IMR-90 (cell line): ENCODE measurements at regions of chr14 and their contacts with region 1.

Region 1: DNA sequence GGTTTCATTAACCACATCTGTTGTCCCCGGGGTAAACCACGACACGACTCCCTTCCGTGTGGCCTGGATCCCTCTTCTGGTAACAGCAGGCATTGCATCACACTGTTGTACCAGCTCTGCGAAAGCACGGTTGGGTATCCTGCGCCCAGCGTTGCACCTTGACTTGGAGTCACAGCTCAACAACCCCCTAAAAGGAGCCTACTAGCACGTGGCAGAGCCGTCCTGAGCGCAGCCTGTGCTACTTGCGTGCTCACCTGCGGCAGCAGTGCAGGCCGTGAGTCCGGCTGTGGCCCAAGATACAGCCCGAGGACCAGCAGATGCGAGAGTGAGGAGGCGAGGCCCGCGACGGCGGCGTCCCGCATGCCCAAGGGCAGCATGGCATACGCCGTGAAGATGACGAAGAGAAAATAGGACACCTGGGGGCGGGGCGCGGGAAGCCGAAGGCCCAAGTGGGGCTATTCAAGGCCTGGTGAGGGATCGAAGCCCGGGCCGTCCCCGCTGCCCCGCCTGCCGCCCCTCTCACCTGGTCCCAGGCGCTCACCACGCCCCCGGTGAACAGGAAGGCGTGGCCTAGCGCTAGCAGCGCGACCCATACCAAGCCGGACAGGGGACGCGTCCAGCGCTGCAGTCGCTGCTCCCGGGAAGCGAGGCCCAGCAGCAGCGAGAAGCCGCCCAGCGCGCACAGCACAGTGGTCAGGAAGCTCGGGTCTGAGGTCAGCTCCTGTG is 2.4 kb downstream of the ADCY4 start:
- DNase-seq: peak; percentile 52
- ATAC-seq: peak; percentile 79
- H3K4me3 ChIP-seq: no peak overlapping the region
- H3K27ac ChIP-seq: no peak overlapping the region
- H3K4me1 ChIP-seq: peaks cover 3% of the 10 kb centered on the region; the same call in 1 of the 2 replicates
- H3K27me3 ChIP-seq: peaks cover 43% of the 10 kb centered on the region
- CTCF ChIP-seq: peak; percentile 64
- POLR2A ChIP-seq: no peak
- RAD21 ChIP-seq: peak; percentile 52

Region 2: DNA sequence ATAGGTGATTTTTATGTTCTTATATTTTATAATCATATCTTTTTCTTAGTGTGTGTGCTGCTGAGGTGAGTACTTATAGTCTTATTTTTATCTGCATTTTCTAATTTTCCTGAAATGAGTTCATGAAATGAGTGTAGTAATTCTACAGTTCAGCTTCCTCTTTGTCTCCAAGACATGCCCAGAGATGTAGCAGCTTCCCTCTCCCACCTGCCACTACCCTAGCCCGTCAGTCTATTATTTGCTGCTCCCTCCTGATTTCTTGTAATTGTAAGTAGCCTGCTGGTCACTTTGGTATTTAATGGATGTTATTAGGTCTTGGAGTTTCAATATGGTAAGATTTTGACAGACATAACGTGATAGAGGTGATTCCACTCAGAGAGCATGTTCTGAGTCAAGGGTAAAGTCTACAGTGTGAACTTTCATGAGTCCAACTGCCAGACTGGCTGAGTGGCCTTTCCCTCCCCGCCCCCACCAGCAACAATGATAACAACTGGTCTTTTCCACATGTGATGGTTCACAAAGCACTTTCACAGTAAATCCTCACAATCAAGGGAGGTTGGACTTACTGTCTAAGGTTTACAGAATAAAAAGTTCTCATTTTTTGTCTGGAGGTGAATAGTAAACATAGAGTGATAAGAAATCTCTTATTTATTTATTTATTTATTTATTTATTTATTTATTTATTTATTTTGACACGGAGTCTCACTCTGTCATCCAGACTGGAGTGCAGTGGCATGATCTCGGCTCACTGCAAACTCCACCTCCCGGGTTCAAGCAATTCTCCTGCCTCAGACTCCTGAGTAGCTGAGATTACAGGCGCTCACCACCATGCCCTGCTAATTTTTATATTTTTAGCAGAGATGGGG is 11.6 kb after region 1 on chr14:
- CTCF ChIA-PET with region 1: interaction called, 11 read pairs
- POLR2A ChIA-PET with region 1: no interaction called
- dilution Hi-C with region 1: no loop called
- in situ Hi-C with region 1: no loop called
- intact Hi-C with region 1: no loop called
- DNase-seq: no peak
- ATAC-seq: no peak; the same call in 1 of the 2 replicates
- H3K4me3 ChIP-seq: no peak overlapping the region
- H3K27ac ChIP-seq: no peak overlapping the region
- H3K4me1 ChIP-seq: no peaks in the 10 kb centered on the region
- H3K27me3 ChIP-seq: peaks cover 56% of the 10 kb centered on the region
- CTCF ChIP-seq: no peak
- POLR2A ChIP-seq: no peak
- RAD21 ChIP-seq: no peak

Region 3: DNA sequence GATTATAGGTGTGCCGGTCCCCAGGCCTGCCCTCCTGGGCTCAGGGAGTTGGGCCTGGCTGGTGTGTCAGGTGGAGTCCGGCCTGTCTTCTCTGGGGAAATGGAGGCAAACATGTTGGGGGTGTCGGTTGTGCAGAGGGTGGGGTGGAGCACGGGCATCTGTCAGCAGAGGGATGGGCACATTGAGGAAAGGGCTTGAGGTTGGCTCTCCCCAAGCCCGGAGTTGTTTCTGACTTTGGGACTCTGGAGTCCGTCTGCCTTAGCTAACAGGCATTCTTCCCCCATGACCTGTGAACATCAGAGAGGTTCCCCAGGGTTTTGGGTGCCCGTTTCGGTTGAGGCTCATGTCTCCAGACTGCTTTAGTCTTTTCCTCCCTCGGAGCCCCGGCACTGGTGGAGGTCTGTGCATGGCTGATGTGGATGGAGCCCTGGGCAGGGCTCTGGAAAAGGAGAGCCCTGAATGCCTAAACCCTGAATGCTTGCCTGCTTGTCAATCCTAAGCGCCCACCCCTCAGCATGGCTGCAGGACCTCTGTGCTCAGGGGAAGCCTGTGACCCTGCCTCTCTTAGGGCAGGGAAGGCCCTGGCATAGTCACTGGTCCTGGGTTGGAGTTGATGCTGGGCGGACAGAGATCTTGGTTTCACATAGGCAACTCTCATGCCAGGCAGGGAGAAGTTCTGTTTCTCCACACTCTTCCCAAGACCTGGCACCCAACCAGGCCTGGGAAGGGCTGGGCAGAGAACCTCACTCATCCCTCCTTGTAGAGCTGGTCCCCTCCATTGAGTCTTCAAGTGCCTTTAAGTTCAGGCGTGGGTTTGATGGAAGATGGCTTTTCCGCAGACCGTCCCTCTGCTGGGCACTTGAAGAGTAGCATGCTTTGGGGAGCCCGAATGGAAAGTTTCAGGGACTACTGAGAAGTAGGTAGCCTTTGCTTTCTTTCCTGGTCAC is 79.3 kb after region 1 on chr14:
- CTCF ChIA-PET with region 1: interaction called, 9 read pairs
- POLR2A ChIA-PET with region 1: no interaction called
- dilution Hi-C with region 1: no loop called
- in situ Hi-C with region 1: no loop called
- intact Hi-C with region 1: loop called (anchors 1 kb)
- DNase-seq: peak; percentile 59
- ATAC-seq: peak; percentile 93
- H3K4me3 ChIP-seq: no peak overlapping the region
- H3K27ac ChIP-seq: no peak overlapping the region
- H3K4me1 ChIP-seq: no peaks in the 10 kb centered on the region
- H3K27me3 ChIP-seq: no peaks in the 10 kb centered on the region
- CTCF ChIP-seq: peak; percentile 68
- POLR2A ChIP-seq: no peak
- RAD21 ChIP-seq: peak; percentile 69